ENCODE measurements at regions of chr7 and their contacts with region 1.

Region 1: GRCh38 chr7:128718967-128719642 is 20.1 kb upstream of the CALU start:
- DNase-seq: no peak
- H3K4me3 Mint-ChIP-seq: no peak overlapping the region
- H3K27ac Mint-ChIP-seq: no peak overlapping the region
- H3K4me1 Mint-ChIP-seq: no peaks in the 10 kb centered on the region
- H3K27me3 Mint-ChIP-seq: peaks cover 26% of the 10 kb centered on the region
- CTCF ChIP-seq: no peak

Region 2: DNA sequence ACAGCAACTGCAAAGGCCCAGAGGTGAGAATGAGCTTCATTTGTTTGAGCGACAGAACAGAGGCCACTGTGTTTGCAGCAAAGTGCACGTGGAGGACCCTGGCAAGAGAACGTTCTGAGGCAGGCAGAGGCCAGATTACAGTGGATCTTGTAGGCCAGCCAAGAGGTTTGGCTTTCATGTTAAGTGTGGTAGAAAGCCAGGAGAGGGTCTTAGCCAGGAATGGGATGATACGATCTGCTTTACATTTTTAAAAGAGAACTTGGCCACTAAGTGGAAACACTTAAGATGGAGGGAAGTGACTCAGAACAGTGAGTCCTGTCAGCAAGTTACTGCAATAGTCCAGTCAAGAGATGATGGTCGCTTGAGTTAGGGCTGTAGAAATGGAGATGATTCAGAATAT is 77.2 kb after region 1 on chr7:
- CTCF ChIA-PET with region 1: no interaction called
- intact Hi-C with region 1: no loop called
- DNase-seq: no peak
- H3K4me3 Mint-ChIP-seq: no peak overlapping the region
- H3K27ac Mint-ChIP-seq: no peak overlapping the region
- H3K4me1 Mint-ChIP-seq: no peaks in the 10 kb centered on the region
- H3K27me3 Mint-ChIP-seq: peaks cover 55% of the 10 kb centered on the region
- CTCF ChIP-seq: no peak

Region 3: DNA sequence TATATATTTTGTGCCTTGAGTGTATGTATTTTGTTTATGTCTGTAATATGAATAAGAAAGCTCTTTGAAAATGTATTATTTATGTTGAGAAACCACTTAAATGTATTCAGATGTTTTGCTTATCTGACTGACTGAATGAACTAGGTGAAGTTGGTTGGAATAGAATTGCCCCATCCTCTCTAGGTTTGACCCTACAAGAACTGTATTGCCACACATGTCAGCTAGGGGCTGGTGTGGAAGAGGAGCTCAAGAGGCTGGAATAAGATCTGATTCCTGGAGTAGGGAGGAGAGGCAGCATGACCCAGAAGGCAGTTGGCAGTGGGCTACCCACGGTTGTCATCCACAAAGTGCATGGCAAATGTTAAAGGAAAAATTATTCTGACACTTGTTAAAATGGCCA is 1497.6 kb after region 1 on chr7:
- CTCF ChIA-PET with region 1: interaction called, 11 read pairs
- intact Hi-C with region 1: no loop called
- DNase-seq: no peak
- H3K4me3 Mint-ChIP-seq: no peak overlapping the region
- H3K27ac Mint-ChIP-seq: no peak overlapping the region
- H3K4me1 Mint-ChIP-seq: peaks cover 15% of the 10 kb centered on the region
- H3K27me3 Mint-ChIP-seq: no peaks in the 10 kb centered on the region
- CTCF ChIP-seq: no peak

Measured in Calu3 (cell line).